Mammary epithelial cell (primary cell): ENCODE measurements at regions of chr14 and their contacts with region 1.

Region 1: GRCh38 chr14:32710731-32711680 is 227.7 kb upstream of the NPAS3 start:
- DNase-seq: no peak
- H3K4me3 ChIP-seq: no peak overlapping the region
- H3K27ac ChIP-seq: no peak overlapping the region
- H3K4me1 ChIP-seq: peaks cover 8% of the 10 kb centered on the region
- H3K27me3 ChIP-seq: no peaks in the 10 kb centered on the region
- CTCF ChIP-seq: peak; percentile 52 to 67

Region 2: DNA sequence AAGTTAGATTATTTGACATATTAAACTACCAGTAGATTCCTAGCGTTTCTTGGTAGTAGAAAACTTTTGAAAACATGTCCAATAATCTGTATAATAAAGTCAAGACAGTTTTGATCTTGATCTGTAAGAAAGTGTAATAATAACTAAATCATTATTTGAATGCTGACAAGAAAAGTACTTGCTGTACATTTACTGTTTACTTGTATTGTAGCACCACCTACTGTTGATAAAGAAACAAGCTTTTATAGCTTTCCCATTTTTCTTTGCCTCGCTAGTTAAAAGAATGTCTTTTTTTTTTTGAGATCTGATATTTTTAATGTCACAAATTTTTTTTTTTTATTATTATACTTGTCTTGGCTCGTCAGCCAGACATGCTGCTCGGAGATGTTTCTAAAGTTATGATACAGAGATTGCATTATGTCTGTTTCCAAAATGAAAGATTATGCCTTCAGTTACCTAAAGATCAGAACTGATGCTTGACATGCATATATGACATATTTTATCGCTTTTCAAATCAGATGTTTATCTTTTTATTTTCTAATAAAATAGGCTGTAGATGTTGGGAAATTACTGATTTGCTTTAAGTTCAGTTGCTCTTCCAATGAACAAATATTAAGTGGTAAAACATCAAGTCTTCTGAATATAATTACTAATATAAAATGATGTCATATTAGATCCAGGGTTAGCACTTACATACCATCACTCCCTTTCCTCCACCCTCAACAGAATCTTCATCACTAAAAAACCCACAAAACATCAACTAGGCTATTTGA is 241.4 kb before region 1 on chr14:
- CTCF ChIA-PET with region 1: no interaction called
- dilution Hi-C with region 1: no loop called
- in situ Hi-C with region 1: no loop called
- intact Hi-C with region 1: no loop called
- DNase-seq: peak; percentile 39
- H3K4me3 ChIP-seq: no peak overlapping the region
- H3K27ac ChIP-seq: peak overlapping the region; percentile 98
- H3K4me1 ChIP-seq: peaks cover 67% of the 10 kb centered on the region
- H3K27me3 ChIP-seq: no peaks in the 10 kb centered on the region
- CTCF ChIP-seq: peak; percentile 51 to 52

Region 3: GRCh38 chr14:32588448-32589320 is 122.3 kb before region 1 on chr14:
- CTCF ChIA-PET with region 1: no interaction called
- dilution Hi-C with region 1: no loop called
- in situ Hi-C with region 1: no loop called
- intact Hi-C with region 1: loop called (anchors 2 kb)
- DNase-seq: peak; percentile 21
- H3K4me3 ChIP-seq: no peak overlapping the region
- H3K27ac ChIP-seq: no peak overlapping the region
- H3K4me1 ChIP-seq: peaks cover 15% of the 10 kb centered on the region
- H3K27me3 ChIP-seq: no peaks in the 10 kb centered on the region
- CTCF ChIP-seq: peak; percentile 80

Region 4: DNA sequence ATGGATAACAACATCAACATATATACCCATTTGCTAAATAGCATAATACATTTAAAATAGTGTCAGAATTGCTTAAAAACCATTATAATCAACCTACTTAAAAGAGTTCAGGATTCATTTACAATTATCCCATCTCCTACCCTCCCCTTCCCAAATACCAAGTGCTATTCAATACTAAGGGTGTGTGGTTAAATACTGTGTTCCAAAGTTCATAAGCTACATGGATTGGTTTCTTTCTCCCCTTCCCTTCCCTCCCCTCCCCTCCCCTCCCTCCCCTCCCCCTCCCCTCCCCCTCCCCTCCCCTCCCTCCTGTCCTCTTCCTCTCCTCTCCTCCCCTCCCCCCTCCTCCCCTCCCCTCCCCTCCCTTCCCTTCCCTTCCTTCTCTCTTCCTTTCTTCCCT is 130.7 kb after region 1 on chr14:
- CTCF ChIA-PET with region 1: no interaction called
- dilution Hi-C with region 1: loop called (anchors 5 kb)
- in situ Hi-C with region 1: no loop called
- intact Hi-C with region 1: no loop called
- DNase-seq: no peak
- H3K4me3 ChIP-seq: no peak overlapping the region
- H3K27ac ChIP-seq: no peak overlapping the region
- H3K4me1 ChIP-seq: no peaks in the 10 kb centered on the region
- H3K27me3 ChIP-seq: peaks cover 2% of the 10 kb centered on the region
- CTCF ChIP-seq: no peak

Region 5: GRCh38 chr14:32896979-32897697 is 186.1 kb after region 1 on chr14:
- CTCF ChIA-PET with region 1: no interaction called
- dilution Hi-C with region 1: no loop called
- in situ Hi-C with region 1: no loop called
- intact Hi-C with region 1: loop called (anchors 10 kb)
- DNase-seq: peak; percentile 1
- H3K4me3 ChIP-seq: peak overlapping the region; percentile 45 to 69 (median 54)
- H3K27ac ChIP-seq: peak overlapping the region; percentile 29
- H3K4me1 ChIP-seq: no peaks in the 10 kb centered on the region
- H3K27me3 ChIP-seq: peaks cover under 1% of the 10 kb centered on the region
- CTCF ChIP-seq: no peak

Region 6: GRCh38 chr14:32998433-32998832 is 287.4 kb after region 1 on chr14:
- CTCF ChIA-PET with region 1: no interaction called
- dilution Hi-C with region 1: no loop called
- in situ Hi-C with region 1: loop called in 1 of 2 experiments (anchors 25 kb)
- intact Hi-C with region 1: loop called (anchors 1 kb)
- DNase-seq: peak; percentile 9
- H3K4me3 ChIP-seq: no peak overlapping the region
- H3K27ac ChIP-seq: no peak overlapping the region
- H3K4me1 ChIP-seq: no peaks in the 10 kb centered on the region
- H3K27me3 ChIP-seq: no peaks in the 10 kb centered on the region
- CTCF ChIP-seq: peak; percentile 44 to 61

Region 7: DNA sequence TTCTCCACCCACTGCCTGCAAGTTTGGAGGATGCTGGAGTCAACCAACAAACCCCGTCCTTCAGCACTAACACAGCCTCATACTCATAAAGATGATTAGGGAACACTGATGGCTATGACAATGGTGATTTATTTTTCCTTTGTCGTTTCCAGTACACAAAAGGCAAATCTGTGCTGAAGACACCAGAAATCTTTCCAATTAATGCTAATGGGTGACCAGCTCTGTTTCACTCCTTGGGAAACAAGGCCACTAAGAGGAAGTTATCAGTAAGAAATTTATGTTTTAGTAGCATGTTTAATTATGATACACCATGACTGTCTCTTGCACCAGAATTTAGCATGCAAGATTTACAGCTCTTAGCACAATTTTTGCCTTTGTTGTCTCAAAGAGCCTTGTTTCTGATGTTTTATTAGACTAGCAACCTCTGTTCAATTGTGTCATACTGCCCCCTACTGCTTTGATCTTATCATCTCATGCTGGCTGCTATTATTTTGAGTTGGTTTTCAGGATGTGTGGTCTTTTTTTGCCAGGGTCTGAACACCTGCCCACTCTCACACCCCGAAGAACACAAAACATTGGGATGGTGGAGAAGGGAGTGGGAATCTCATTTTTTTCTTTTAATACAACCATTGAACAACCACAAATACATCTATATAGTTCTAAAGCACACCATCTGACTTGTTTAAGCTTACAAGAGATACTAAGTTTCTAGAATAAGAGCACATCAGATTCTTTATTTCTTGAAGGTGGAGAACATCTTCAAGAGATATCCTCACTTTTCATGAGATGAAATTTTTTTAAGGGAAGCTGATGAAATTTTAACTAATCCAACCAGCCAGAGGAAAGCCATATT is 1590.1 kb after region 1 on chr14:
- CTCF ChIA-PET with region 1: no interaction called
- dilution Hi-C with region 1: no loop called
- in situ Hi-C with region 1: no loop called
- intact Hi-C with region 1: loop called (anchors 5 kb)
- DNase-seq: peak; percentile 46
- H3K4me3 ChIP-seq: no peak overlapping the region
- H3K27ac ChIP-seq: no peak overlapping the region
- H3K4me1 ChIP-seq: peaks cover 18% of the 10 kb centered on the region
- H3K27me3 ChIP-seq: no peaks in the 10 kb centered on the region
- CTCF ChIP-seq: peak; percentile 70 to 71